Left colon (tissue), 2 donors: ENCODE measurements at regions of chr11 and their contacts with region 1.

Region 1: DNA sequence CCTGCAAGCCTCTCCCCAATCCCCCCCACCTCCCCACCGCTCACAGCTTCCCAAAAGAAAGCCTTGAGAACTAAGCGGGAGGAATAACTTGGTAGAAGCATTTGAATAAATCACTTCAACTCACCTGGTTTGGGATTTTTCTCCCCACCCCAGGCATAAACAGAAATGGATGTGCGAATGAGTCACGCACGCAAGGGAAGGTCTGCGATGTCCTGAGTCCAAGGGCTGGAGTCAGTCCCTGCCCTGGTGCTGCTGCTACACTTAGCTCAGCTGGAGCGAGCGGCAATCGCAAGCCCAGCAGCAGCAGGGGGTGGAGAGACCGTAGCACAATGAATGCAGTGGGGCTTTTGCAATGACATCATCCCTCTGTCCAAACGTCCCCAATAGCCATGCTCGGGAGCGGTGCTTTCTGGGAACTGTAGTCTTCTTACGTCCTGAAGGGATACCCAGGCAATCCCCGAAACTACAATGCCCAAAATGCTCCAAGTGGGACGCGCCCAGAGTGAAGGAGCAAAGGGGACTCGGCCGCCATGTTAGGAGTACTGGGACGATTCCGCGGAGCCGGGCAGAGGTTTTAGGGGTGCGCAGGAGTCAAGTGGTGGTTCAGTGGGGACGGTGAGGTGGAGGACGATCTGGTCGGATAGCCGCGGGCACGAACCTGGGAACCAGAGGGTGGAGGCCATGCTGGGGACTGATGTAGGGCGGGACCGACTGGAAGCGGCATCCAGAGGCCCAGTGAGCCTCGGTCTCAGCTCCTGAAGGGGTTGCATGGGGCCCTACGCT is at the start of gene RAB30:
- DNase-seq: peak; percentile 93 to 99
- ATAC-seq: peak; percentile 97
- total RNA-seq, gene RAB30: 5.9 to 24.3 TPM

Region 2: DNA sequence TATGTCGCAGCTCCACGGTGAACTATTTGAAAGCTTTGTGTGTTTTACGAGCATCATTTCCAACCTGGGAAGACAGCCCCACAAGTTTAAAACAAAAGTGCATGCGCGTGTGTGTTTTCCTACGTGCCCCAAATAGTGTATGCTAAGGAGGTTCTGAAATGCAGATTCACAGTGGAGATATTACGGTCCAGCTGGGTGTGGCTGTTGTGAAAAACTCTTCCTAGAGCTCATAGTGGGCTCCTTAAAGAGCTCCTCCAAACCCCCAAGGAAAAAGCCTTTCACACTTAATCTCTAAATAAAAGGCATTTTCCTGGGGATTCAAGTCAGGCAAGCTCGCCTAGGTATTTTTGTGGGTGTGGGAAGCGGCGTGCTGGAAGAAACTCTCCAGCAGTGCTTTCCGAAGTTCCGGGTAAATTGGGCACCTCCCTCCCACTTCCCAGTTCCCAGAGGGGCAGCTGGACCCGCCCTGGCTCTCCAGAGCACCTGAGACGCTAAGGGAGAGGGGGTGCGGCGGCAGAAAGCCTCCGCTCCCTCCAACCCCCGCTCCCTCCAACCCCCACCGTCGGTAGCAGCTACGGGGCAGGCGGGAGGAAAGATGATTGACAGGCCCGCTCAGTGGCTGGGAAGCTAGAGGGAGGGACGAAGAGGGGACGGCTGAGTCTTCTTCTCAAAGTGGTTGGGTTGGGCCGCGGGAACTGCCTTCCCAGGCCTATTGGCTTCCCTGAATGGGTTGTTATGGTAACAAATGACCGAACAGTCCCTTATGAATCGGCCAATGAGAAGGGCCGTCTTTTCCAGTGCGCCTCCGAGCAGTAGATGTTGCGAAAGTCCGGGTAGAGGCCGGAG is 84.6 kb after region 1 on chr11:
- intact Hi-C with region 1: loop called in 1 of 2 experiments (anchors 5 kb)
- DNase-seq: peak in 1 of 2 donors; percentile 99
- ATAC-seq: peak; percentile 84